Posterior vena cava (tissue), 2 donors: ENCODE measurements at regions of chr2 and their contacts with region 1.

Region 1: DNA sequence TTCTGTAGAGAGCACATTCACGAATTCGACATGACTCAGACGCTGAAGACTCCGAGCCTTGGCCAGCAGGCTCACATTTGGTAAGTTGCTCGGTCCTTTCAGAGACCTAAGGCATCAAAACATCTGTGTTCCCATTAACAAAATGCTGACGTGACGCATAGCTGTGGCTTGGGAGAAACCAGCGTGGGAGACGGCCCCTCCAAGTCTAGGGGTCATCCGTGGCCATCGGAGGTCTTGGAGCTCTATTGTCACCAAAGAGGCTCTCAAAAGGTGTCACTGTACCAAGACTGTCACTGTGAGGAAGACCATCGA is 14.9 kb downstream of the FBLN7 start:
- DNase-seq: peak; percentile 70

Region 2: DNA sequence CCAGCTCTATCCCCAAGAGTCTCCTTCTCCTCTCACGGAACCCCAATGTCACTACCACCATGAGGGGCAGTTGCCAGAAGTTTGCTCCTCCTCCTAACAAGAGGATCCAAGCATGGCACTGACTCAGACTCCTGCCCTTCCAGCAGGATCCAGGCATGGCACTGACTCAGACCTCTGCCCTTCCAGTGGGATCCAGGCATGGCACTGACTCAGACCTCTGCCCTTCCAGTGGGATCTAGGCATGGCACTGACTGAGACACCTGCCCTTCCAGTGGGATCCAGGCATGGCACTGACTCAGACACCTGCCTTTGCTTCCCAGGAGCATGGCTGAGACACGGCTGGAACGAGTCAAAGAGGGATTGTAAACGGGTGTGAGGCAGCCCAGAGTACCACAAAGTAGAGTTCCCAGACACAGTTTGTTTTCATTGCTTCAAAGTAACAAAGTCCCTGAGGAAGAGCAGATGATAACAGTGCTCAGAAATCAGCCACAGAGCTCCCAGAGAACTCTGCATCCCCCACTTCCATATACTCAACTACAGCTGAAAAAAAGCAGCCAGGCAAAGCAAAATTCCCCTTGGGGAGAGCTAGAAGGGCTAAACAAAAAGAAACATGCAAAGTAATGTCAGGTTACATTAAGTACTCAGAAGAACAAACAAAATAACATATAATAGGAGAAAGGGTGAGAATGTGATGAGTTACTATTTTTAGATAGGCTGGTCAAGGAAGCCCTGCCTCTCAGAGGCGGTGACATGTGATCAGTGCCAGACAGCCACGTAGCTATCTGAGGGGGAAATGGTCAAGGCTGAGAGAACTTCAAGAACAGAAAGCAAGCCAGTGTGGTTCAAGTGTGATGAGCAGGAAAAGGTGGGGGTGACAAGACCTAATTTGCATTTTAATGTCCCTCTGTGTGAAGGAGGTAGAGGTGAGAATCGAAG is 1478.2 kb before region 1 on chr2:
- intact Hi-C with region 1: no loop called
- DNase-seq: no peak

Region 3: DNA sequence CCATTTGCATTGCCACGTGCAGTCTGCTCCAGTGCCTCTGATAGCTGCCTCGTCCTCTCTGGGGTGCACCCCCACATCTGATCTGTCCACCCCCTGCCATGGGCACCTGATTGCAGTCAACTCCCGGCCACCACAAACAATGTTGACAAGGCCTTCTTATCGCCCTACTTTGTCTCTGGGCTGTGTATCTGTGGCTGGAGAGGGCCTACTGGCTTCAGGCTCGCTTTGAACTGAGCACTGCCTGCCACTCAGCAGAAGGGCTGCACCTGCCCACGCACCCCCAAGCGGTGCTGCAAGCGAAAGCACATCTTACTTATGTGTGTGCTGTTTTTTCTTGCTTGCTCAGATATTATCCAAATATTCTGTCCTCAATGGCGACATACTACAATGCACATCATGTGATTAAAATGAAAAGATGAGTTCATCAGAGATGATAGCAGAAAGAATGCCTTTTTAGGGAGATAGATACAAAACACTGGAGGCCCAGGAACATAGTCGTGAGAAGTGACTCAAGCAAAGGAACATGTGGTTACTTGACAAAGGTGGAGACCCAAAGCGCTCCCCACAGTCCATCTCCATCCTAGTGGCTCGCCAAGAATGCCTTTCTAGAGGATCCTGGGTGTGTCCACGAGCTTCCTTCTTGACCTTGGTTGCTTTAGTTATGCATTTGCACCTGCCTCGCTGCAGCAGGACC is 13.8 kb after region 1 on chr2:
- intact Hi-C with region 1: loop called in 1 of 2 experiments (anchors 1 kb)
- DNase-seq: no peak